Heart left ventricle (tissue), 16 donors: ENCODE measurements at regions of chr12 and their contacts with region 1.

Region 1: DNA sequence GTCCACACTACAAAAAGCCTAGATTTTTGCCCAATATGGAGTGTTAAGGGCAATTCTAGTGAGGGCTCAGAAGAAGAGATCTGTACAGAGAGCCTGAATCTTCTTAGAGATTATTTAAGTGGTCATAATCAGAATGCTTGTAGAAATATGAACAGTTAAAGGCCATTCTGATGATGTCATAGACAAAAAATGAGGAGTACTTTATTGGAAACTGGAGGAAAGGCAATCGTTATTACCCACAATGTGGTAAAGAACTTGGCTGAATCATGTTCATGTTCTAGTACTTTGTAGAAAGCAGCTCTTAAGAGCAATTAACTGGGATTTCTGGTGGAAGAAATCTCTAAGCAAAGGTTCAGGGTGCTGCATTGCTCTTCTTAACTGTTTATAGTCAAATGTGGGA is 36.4 kb upstream of the SYT10 start:
- DNase-seq: no peak
- ATAC-seq: no peak
- H3K4me3 ChIP-seq: no peak overlapping the region
- H3K27ac ChIP-seq: no peak overlapping the region
- H3K4me1 ChIP-seq: no peaks in the 10 kb centered on the region
- H3K27me3 ChIP-seq: peaks cover 0 to 4% (median 0%) of the 10 kb centered on the region in 9 donors
- CTCF ChIP-seq: no peak
- POLR2A ChIP-seq: no peak

Region 2: GRCh38 chr12:33310471-33310870 is 165.6 kb before region 1 on chr12:
- intact Hi-C with region 1: no loop called
- DNase-seq: no peak
- ATAC-seq: no peak
- H3K4me3 ChIP-seq: no peak overlapping the region
- H3K27ac ChIP-seq: no peak overlapping the region
- H3K4me1 ChIP-seq: no peaks in the 10 kb centered on the region
- H3K27me3 ChIP-seq: no peaks in the 10 kb centered on the region
- CTCF ChIP-seq: no peak
- POLR2A ChIP-seq: no peak

Region 3: GRCh38 chr12:33839220-33839619 is 363.2 kb after region 1 on chr12:
- intact Hi-C with region 1: loop called in 1 of 10 experiments (anchors 10 kb)
- DNase-seq: no peak
- ATAC-seq: no peak
- H3K4me3 ChIP-seq: no peak overlapping the region
- H3K27ac ChIP-seq: no peak overlapping the region
- H3K4me1 ChIP-seq: no peaks in the 10 kb centered on the region
- H3K27me3 ChIP-seq: no peaks in the 10 kb centered on the region
- CTCF ChIP-seq: no peak
- POLR2A ChIP-seq: no peak